Activated CD8-positive, alpha-beta T cell treated with anti-CD3 and anti-CD28 coated beads for 36 hours (primary cell): ENCODE measurements at regions of chr1 and their contacts with region 1.

Region 1: DNA sequence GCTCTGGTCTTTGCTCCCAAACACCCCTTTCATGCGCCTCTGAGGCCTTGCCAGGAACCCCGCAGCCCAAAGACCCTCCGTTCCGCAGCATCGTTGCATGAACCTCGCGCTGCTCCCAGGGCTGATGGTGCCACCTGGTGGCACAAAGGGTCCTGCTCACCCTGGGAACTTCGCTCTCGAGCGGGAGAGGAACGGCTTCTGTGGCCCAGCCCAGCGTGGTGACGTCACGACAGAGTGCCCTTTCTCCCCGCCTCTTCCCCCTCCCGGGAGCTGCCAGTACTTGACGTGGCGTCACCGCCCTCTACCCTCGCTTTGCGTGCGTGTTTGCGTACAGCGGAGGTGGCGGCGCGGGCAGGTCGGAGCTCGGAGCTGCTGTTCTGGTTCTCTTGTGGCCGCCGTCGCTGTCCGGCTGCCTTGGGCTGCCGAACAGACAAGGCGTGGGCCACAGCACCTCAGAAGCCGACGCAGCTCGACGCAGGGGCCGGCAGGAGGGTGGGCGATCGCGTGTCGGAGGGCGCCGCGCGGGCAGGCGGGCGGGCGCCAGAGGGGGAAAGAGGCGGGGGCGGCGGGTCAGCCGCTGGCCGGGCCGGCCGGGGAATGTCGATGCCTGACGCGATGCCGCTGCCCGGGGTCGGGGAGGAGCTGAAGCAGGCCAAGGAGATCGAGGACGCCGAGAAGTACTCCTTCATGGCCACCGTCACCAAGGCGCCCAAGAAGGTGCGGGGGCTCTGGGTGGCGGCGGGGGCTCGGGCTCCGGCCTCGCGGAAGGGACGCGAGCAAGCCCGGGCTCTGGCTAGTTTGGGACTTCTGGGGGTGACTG is at the start of gene AHCYL1:
- DNase-seq: peak; percentile 100
- ATAC-seq: peak; percentile 99
- H3K4me3 Mint-ChIP-seq: peak within 1 kb of the TSS; percentile 98
- H3K27ac Mint-ChIP-seq: peak within 1 kb of the TSS; percentile 98
- H3K4me1 Mint-ChIP-seq: peaks cover 33% of the 10 kb centered on the region
- H3K27me3 Mint-ChIP-seq: no peaks in the 10 kb centered on the region
- CTCF ChIP-seq: peak; percentile 84
- total RNA-seq, gene AHCYL1: 77.8 to 79.1 TPM

Region 2: DNA sequence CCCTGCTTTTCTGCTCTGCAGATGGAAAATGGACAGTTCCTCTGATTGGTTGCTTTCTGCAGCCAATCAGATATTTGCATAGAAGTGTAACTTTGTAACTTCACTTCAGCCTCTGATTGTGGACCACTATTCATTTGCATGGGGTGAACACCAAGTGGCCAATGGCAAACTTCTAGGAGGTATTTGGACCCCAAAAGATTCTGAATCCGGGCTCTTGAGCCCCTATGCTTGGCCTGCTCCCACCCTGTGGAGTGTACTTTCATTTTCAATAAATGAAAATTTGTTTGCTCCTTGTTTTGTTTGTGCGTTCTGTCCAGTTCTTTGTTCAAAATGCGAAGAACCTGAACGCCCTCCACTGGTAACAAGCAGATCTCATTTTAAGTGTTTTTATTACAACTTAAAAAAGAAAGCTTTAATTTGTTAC is 335.2 kb before region 1 on chr1:
- CTCF ChIA-PET with region 1: interaction called, 20 read pairs
- POLR2A ChIA-PET with region 1: interaction called, 9 read pairs
- intact Hi-C with region 1: loop called (anchors 5 kb)
- DNase-seq: no peak
- ATAC-seq: no peak
- H3K4me3 Mint-ChIP-seq: no peak overlapping the region
- H3K27ac Mint-ChIP-seq: no peak overlapping the region
- H3K4me1 Mint-ChIP-seq: no peaks in the 10 kb centered on the region
- H3K27me3 Mint-ChIP-seq: peaks cover 3% of the 10 kb centered on the region
- CTCF ChIP-seq: peak; percentile 32

Region 3: DNA sequence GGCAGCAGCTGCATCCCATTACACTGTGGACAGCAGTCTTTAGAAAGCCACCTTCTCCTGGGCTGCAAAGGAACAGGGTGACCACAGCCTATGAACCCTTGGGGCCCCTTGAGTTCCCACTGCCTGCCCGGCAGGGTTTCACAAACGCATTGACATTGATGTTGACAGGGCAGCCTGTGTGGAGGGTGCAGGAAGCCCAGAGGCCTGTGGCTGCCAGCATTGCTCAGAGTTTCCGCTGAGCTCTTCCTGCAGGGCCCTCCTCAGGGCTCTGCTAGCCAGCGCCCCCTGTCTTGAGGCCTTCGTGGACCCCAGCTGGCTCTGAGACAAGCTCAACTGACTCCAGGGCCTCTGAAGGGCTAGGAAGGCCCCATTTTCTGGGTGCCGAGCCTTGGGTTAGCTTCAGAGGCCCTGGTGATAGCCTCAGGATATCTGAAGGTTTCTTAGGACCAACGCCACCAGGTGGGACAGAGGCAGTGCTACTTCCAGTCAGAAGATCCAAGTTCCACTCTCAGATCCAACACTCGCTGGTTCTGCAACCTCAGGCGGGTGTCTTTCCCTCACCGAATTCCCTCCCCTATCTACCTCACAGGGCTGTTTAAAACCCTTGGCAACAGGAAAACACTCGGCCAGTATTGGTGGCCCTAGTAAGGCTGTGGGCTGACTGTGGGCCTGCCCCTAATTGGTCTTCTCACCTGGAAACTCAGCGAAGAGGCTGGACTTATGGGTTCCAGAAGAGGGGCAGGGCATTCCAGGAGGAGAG is 193.8 kb before region 1 on chr1:
- CTCF ChIA-PET with region 1: interaction called, 745 read pairs
- POLR2A ChIA-PET with region 1: interaction called, 14 read pairs
- intact Hi-C with region 1: no loop called
- DNase-seq: peak; percentile 95
- ATAC-seq: peak; percentile 94
- H3K4me3 Mint-ChIP-seq: no peak overlapping the region
- H3K27ac Mint-ChIP-seq: peak overlapping the region; percentile 92
- H3K4me1 Mint-ChIP-seq: peaks cover 63% of the 10 kb centered on the region
- H3K27me3 Mint-ChIP-seq: no peaks in the 10 kb centered on the region
- CTCF ChIP-seq: peak; percentile 80

Region 4: DNA sequence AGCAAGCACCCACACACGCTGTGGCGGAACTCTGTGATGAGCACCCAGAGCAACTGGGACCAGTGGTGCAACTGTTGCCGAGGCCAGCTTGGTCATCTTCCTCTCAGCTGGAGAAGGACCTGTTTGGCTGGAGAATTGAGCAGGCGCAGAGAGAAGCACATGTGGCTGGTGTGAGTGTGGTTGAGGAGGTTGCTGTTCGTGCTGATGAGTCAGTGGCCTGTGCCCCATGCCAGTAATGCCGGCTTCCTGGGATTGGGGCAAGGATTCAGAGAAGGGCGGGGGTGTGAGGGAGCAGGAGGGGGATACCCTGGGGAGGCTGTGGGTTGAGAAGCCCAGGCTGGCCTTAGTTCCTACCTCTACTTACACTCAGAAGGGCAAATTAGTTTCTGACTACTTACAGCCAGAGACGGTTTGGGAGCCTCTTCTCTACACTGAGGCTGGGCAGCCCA is 163.4 kb before region 1 on chr1:
- CTCF ChIA-PET with region 1: no interaction called
- POLR2A ChIA-PET with region 1: no interaction called
- intact Hi-C with region 1: no loop called
- DNase-seq: peak; percentile 79
- ATAC-seq: peak; percentile 80
- H3K4me3 Mint-ChIP-seq: no peak overlapping the region
- H3K27ac Mint-ChIP-seq: peak overlapping the region; percentile 36
- H3K4me1 Mint-ChIP-seq: peaks cover 35% of the 10 kb centered on the region
- H3K27me3 Mint-ChIP-seq: no peaks in the 10 kb centered on the region
- CTCF ChIP-seq: no peak

Region 5: DNA sequence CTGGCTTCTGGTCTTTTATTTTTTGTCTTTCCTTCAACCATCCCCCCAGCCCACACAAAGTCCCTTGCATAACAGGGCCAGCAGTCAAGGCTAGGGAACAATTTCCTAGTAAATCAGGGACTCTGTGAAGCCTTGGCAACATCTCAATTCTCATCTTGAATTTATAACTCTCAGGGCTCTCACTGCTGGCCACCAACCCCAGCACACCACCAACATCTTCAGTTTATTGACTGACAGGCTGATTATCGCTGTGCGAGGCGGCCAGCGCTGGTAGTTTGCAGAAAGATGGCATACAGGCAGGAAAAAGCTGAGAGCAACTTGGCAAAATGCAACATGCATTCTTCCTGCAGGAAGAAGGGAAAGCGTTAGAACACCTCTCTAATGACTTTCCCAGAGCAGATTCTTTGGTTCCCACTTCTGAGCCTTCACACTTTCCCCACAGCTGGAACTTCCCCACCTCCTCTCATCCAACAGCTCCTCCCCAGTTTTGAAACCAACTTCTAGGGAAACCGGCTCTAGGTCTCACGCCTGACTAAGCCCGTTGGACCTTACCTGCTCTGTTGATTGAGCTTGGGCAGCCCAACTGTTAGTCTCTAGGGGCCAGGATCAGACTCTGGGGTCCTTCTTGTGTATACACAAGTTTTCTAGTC is 100.3 kb before region 1 on chr1:
- CTCF ChIA-PET with region 1: interaction called, 21 read pairs
- POLR2A ChIA-PET with region 1: interaction called, 5 read pairs
- intact Hi-C with region 1: no loop called
- DNase-seq: no peak
- ATAC-seq: no peak
- H3K4me3 Mint-ChIP-seq: no peak overlapping the region
- H3K27ac Mint-ChIP-seq: no peak overlapping the region
- H3K4me1 Mint-ChIP-seq: peaks cover 8% of the 10 kb centered on the region
- H3K27me3 Mint-ChIP-seq: no peaks in the 10 kb centered on the region
- CTCF ChIP-seq: no peak

Region 6: GRCh38 chr1:109947582-109948286 is 36.9 kb before region 1 on chr1:
- CTCF ChIA-PET with region 1: interaction called, 24 read pairs
- POLR2A ChIA-PET with region 1: interaction called, 3 read pairs
- intact Hi-C with region 1: no loop called
- DNase-seq: no peak
- ATAC-seq: no peak
- H3K4me3 Mint-ChIP-seq: no peak overlapping the region
- H3K27ac Mint-ChIP-seq: no peak overlapping the region
- H3K4me1 Mint-ChIP-seq: peaks cover 10% of the 10 kb centered on the region
- H3K27me3 Mint-ChIP-seq: no peaks in the 10 kb centered on the region
- CTCF ChIP-seq: no peak

Region 7: DNA sequence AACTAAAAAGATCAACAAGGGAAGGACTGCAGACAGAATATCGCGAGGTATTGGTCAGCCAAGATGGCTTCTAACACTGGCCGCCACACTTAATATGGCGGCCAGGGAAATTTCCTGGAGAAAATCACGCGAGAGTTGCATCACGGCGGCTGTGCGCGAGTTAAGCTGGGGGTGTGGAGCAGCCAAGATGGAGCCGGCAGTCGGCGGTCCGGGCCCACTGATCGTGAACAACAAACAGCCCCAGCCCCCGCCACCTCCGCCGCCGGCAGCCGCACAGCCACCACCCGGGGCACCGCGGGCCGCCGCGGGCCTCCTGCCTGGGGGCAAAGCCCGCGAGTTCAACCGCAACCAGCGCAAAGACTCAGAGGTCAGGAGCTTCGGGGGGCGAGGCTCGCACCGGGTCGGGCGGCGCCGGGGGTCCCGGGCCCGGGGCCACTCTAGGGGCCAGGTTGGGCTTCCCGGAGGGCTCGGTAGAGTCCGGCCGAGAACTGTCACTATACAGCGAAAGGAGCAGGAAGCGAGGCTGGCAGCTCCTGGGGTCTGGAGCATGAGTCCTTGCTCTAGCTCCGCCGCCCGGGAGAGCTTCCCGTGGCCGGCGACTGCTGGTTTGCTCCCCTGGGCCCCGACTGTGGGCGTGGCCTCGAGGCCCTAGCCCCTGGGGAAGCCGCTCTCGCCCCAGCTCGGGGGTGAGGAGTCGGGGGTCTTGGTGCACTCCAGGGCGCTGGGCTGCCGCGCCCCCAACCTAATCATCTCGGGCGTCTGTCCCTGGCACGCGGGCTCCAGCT is 50.0 kb after region 1 on chr1 and contains the start of gene STRIP1:
- CTCF ChIA-PET with region 1: interaction called, 24 read pairs
- POLR2A ChIA-PET with region 1: interaction called, 7 read pairs
- intact Hi-C with region 1: no loop called
- DNase-seq: peak; percentile 95
- ATAC-seq: peak; percentile 94
- H3K4me3 Mint-ChIP-seq: peak within 1 kb of the TSS; percentile 92
- H3K27ac Mint-ChIP-seq: peak within 1 kb of the TSS; percentile 91
- H3K4me1 Mint-ChIP-seq: peaks cover 44% of the 10 kb centered on the region
- H3K27me3 Mint-ChIP-seq: no peaks in the 10 kb centered on the region
- CTCF ChIP-seq: no peak
- total RNA-seq, gene STRIP1: 24.6 to 24.8 TPM

Region 8: GRCh38 chr1:110407260-110408210 is 422.9 kb after region 1 on chr1 and contains the start of gene LAMTOR5:
- CTCF ChIA-PET with region 1: no interaction called
- POLR2A ChIA-PET with region 1: no interaction called
- intact Hi-C with region 1: no loop called
- DNase-seq: peak; percentile 96
- ATAC-seq: peak; percentile 94
- H3K4me3 Mint-ChIP-seq: peak within 1 kb of the TSS; percentile 98
- H3K27ac Mint-ChIP-seq: peak within 1 kb of the TSS; percentile 100
- H3K4me1 Mint-ChIP-seq: peaks cover 19% of the 10 kb centered on the region
- H3K27me3 Mint-ChIP-seq: no peaks in the 10 kb centered on the region
- CTCF ChIP-seq: no peak
- total RNA-seq, gene LAMTOR5: 154 to 160 TPM

Region 9: DNA sequence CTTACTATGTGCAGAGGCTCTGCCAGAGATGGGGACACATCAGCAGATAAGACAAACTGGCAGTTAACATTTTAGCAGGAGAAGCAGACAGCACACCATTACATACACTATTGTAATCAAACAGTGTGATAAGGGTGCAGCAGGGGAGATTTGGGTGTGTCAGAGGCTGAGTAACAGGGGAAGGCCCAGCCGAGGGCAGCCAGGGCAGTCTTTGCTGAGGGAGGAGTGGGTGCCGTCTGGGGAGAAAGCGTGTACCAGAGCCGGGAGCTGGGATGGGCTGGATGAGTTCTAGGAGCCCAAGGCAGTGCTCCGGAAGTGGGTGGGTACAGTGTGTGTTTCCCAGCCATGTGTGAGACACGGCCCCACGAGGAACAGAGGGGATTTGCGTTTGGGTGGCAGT is 503.1 kb after region 1 on chr1:
- CTCF ChIA-PET with region 1: no interaction called
- POLR2A ChIA-PET with region 1: no interaction called
- intact Hi-C with region 1: no loop called
- DNase-seq: no peak
- ATAC-seq: no peak
- H3K4me3 Mint-ChIP-seq: no peak overlapping the region
- H3K27ac Mint-ChIP-seq: no peak overlapping the region
- H3K4me1 Mint-ChIP-seq: no peaks in the 10 kb centered on the region
- H3K27me3 Mint-ChIP-seq: peaks cover 6% of the 10 kb centered on the region
- CTCF ChIP-seq: no peak